PC-9 (cell line): ENCODE measurements at regions of chr17 and their contacts with region 1.

Region 1: GRCh38 chr17:67970815-67971214 is 25.5 kb downstream of the C17orf58 start:
- DNase-seq: no peak
- H3K4me3 ChIP-seq: no peak overlapping the region
- H3K27ac ChIP-seq: no peak overlapping the region
- H3K4me1 ChIP-seq: no peaks in the 10 kb centered on the region
- H3K27me3 ChIP-seq: no peaks in the 10 kb centered on the region
- CTCF ChIP-seq: no peak

Region 2: GRCh38 chr17:67656494-67657203 is 314.2 kb before region 1 on chr17:
- CTCF ChIA-PET with region 1: no interaction called
- POLR2A ChIA-PET with region 1: no interaction called
- intact Hi-C with region 1: no loop called
- DNase-seq: no peak
- H3K4me3 ChIP-seq: no peak overlapping the region
- H3K27ac ChIP-seq: no peak overlapping the region
- H3K4me1 ChIP-seq: no peaks in the 10 kb centered on the region
- H3K27me3 ChIP-seq: no peaks in the 10 kb centered on the region
- CTCF ChIP-seq: no peak

Region 3: GRCh38 chr17:67737145-67737544 is 233.7 kb before region 1 on chr17:
- CTCF ChIA-PET with region 1: no interaction called
- POLR2A ChIA-PET with region 1: no interaction called
- intact Hi-C with region 1: no loop called
- DNase-seq: no peak
- H3K4me3 ChIP-seq: no peak overlapping the region
- H3K27ac ChIP-seq: no peak overlapping the region
- H3K4me1 ChIP-seq: no peaks in the 10 kb centered on the region
- H3K27me3 ChIP-seq: no peaks in the 10 kb centered on the region
- CTCF ChIP-seq: no peak

Region 4: DNA sequence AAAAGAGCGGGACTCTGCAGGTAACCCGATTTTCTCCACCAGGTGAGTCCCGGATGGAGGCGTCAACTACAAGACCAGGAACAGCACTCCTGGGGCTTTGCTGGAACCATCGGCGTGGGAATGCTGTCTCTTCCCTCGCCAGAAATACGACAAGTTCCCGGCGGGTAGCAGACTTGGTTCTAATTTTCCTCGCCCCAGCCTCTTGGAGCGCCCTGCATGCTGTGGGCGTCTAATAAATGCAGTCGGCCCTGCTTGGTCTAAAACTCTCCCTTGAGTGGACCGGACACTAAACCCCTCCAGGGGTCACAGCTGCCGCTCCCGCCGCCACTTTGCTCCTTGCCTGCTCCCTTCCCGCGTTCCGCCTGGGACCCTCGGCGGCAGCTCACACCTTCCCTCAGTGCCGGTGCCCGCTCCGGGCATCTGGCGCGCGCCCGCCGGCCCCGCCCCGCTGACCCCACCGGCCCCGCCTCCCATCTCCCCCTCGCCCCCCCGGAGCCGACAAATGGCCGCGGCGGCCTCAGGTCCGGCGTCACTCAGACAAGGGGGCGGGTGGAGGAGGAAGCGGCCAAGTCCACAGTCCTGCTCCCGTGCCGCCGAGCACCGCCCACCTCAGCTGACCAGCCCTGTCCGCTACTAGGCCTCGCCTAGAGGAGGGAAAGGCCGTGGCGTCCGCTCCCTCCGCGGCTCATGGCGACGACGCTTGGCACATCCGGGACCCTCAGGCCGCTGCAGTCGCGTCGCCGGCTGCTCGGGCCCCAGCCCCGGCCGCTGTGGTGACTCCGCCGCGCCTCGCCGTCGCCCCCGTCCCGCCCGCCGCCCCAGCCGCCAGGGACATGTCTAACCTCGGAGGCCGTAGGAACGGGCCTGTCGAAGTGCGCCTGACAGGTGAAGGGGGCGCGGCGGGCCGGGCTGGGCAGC is 130.5 kb after region 1 on chr17:
- CTCF ChIA-PET with region 1: no interaction called
- POLR2A ChIA-PET with region 1: no interaction called
- intact Hi-C with region 1: loop called (anchors 2 kb)
- DNase-seq: peak; percentile 83 to 94
- H3K4me3 ChIP-seq: peak overlapping the region; percentile 91
- H3K27ac ChIP-seq: no peak overlapping the region
- H3K4me1 ChIP-seq: peaks cover 15% of the 10 kb centered on the region
- H3K27me3 ChIP-seq: no peaks in the 10 kb centered on the region
- CTCF ChIP-seq: no peak